CD8-positive, alpha-beta T cell (primary cell): ENCODE measurements at regions of chr12 and their contacts with region 1.

Region 1: GRCh38 chr12:56571126-56571525 is 49.5 kb downstream of the RBMS2 start:
- DNase-seq: no peak
- ATAC-seq: no peak
- H3K4me3 ChIP-seq: no peak overlapping the region
- H3K4me3 Mint-ChIP-seq: no peak overlapping the region
- H3K27ac ChIP-seq: no peak overlapping the region
- H3K27ac Mint-ChIP-seq: no peak overlapping the region
- H3K4me1 ChIP-seq: peaks cover 16% of the 10 kb centered on the region
- H3K4me1 Mint-ChIP-seq: peaks cover 25% of the 10 kb centered on the region
- H3K27me3 ChIP-seq: no peaks in the 10 kb centered on the region
- H3K27me3 Mint-ChIP-seq: no peaks in the 10 kb centered on the region
- CTCF ChIP-seq: no peak

Region 2: GRCh38 chr12:56510786-56511185 is 60.3 kb before region 1 on chr12:
- CTCF ChIA-PET with region 1: interaction called, 90 read pairs
- POLR2A ChIA-PET with region 1: interaction called, 3 read pairs
- intact Hi-C with region 1: loop called (anchors 1 kb)
- DNase-seq: no peak
- ATAC-seq: no peak
- H3K4me3 ChIP-seq: no peak overlapping the region
- H3K4me3 Mint-ChIP-seq: no peak overlapping the region
- H3K27ac ChIP-seq: no peak overlapping the region
- H3K27ac Mint-ChIP-seq: no peak overlapping the region
- H3K4me1 ChIP-seq: no peaks in the 10 kb centered on the region
- H3K4me1 Mint-ChIP-seq: peaks cover 4% of the 10 kb centered on the region
- H3K27me3 ChIP-seq: no peaks in the 10 kb centered on the region
- H3K27me3 Mint-ChIP-seq: peaks cover 3% of the 10 kb centered on the region
- CTCF ChIP-seq: no peak

Region 3: GRCh38 chr12:56521590-56522371 is 49.3 kb before region 1 on chr12 and contains the start of gene RBMS2:
- CTCF ChIA-PET with region 1: interaction called, 11 read pairs
- POLR2A ChIA-PET with region 1: no interaction called
- intact Hi-C with region 1: no loop called
- DNase-seq: peak; percentile 6 to 85 (median 47)
- ATAC-seq: peak; percentile 95
- H3K4me3 ChIP-seq: peak within 1 kb of the TSS; percentile 43 to 50
- H3K4me3 Mint-ChIP-seq: peak within 1 kb of the TSS; percentile 93
- H3K27ac ChIP-seq: peak within 1 kb of the TSS; percentile 46 to 61
- H3K27ac Mint-ChIP-seq: peak within 1 kb of the TSS; percentile 92
- H3K4me1 ChIP-seq: peaks cover 23% of the 10 kb centered on the region
- H3K4me1 Mint-ChIP-seq: peaks cover 30% of the 10 kb centered on the region
- H3K27me3 ChIP-seq: no peaks in the 10 kb centered on the region
- H3K27me3 Mint-ChIP-seq: no peaks in the 10 kb centered on the region
- CTCF ChIP-seq: no peak
- total RNA-seq, gene RBMS2: 8.3 to 9.9 TPM

Region 4: GRCh38 chr12:56593909-56594621 is 22.9 kb after region 1 on chr12:
- CTCF ChIA-PET with region 1: interaction called, 29 read pairs
- POLR2A ChIA-PET with region 1: no interaction called
- intact Hi-C with region 1: loop called (anchors 1 kb)
- DNase-seq: peak; percentile 34 to 76 (median 65)
- ATAC-seq: peak; percentile 87
- H3K4me3 ChIP-seq: no peak overlapping the region
- H3K4me3 Mint-ChIP-seq: no peak overlapping the region
- H3K27ac ChIP-seq: no peak overlapping the region
- H3K27ac Mint-ChIP-seq: peak overlapping the region; percentile 77
- H3K4me1 ChIP-seq: no peaks in the 10 kb centered on the region
- H3K4me1 Mint-ChIP-seq: no peaks in the 10 kb centered on the region
- H3K27me3 ChIP-seq: no peaks in the 10 kb centered on the region
- H3K27me3 Mint-ChIP-seq: no peaks in the 10 kb centered on the region
- CTCF ChIP-seq: peak; percentile 91